K562 (cell line): ENCODE measurements at regions of chr2 and their contacts with region 1.

Region 1: DNA sequence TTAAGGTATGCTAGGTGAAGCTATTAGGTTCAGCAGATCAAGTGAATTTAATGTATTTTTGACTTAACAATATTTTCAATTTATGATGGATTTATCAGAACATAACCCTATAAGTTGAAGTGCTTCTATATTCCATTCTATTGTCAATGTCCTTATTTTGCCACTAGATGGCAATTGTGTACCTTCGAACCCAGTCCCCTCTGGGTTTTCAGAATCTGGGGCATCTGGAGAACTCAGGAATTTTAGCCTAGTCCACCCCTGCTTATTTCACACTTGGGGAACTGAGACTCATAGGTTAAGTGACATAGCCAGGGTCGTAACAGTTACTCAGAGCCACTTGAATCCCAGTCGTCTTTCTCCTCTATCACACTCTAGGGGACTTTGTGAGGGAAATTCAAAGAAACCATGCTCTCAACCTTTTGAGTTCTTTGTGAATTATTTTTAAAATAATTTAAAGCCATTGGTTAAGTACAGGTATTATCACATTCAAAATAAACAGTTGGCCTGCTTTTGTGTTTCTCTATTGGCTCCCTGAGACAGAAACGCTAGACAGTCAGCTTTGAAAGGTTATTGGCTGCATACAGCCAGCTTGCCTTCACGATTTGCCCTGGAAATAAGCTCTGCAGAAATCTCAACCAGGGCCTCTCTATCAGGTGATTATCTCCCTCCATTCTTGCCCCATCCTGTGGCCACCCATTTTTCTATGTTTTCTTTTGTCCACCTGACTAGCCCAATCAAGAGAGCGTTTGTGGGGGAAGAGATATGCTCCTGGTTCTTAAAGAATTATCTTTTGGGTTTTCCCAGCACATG is 145.0 kb downstream of the TTC27 start:
- DNase-seq: peak; percentile 60 to 61 (median 60)
- ATAC-seq: peak; percentile 78
- H3K4me3 ChIP-seq: no peak overlapping the region
- H3K27ac ChIP-seq: no peak overlapping the region
- H3K4me1 ChIP-seq: peaks cover 4 to 8% of the 10 kb centered on the region in 2 experiments; a peak in 2 of 5 replicates
- H3K27me3 ChIP-seq: no peaks in the 10 kb centered on the region
- CTCF ChIP-seq: peak; percentile 66 to 87 (median 75)
- EP300 ChIP-seq: no peak
- POLR2A ChIP-seq: no peak
- RAD21 ChIP-seq: peak; percentile 96 to 97

Region 2: GRCh38 chr2:32553829-32554432 is 218.9 kb before region 1 on chr2:
- CTCF ChIA-PET with region 1: interaction called, 4 read pairs
- POLR2A ChIA-PET with region 1: no interaction called
- in situ Hi-C with region 1: no loop called
- intact Hi-C with region 1: loop called (anchors 2 kb)
- DNase-seq: peak; percentile 35 to 61 (median 47)
- ATAC-seq: peak; percentile 93
- H3K4me3 ChIP-seq: no peak overlapping the region
- H3K27ac ChIP-seq: no peak overlapping the region
- H3K4me1 ChIP-seq: no peaks in the 10 kb centered on the region
- H3K27me3 ChIP-seq: no peaks in the 10 kb centered on the region
- CTCF ChIP-seq: peak; percentile 36 to 80 (median 44); a peak in 4 of 6 replicates
- EP300 ChIP-seq: no peak
- POLR2A ChIP-seq: no peak
- RAD21 ChIP-seq: peak; percentile 75 to 86

Region 3: GRCh38 chr2:32931945-32932709 is 159.3 kb after region 1 on chr2:
- CTCF ChIA-PET with region 1: no interaction called
- POLR2A ChIA-PET with region 1: no interaction called
- in situ Hi-C with region 1: no loop called
- intact Hi-C with region 1: no loop called
- DNase-seq: no peak
- ATAC-seq: no peak
- H3K4me3 ChIP-seq: no peak overlapping the region
- H3K27ac ChIP-seq: no peak overlapping the region
- H3K4me1 ChIP-seq: peaks cover 0 to 7% of the 10 kb centered on the region in 2 experiments; a peak in 3 of 5 replicates
- H3K27me3 ChIP-seq: 0 out of 5 replicates have a peak, but pooled peaks cover 0 to 2% of the 10 kb centered on the region in 2 experiments
- CTCF ChIP-seq: no peak
- EP300 ChIP-seq: no peak
- POLR2A ChIP-seq: no peak
- RAD21 ChIP-seq: no peak

Region 4: DNA sequence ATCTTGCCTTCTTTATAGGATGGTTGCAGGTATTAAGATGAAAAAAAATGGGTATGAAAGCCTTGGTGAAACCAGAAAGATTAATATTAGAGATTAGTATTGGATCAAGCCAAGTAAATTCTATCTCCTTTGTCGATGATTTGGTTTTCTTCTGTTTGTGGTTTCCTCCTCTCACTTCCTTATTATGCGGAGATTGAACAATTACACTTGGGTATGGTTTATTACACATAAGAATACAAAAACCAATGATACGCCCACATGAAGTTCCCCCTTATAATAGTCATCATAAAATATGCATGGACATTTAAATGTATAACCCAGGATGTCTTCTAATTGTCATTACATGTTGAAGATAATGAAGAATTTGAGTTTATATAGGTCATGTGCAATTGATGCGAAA is 178.8 kb after region 1 on chr2:
- CTCF ChIA-PET with region 1: no interaction called
- POLR2A ChIA-PET with region 1: no interaction called
- in situ Hi-C with region 1: loop called (anchors 5 kb)
- intact Hi-C with region 1: loop called (anchors 1 kb)
- DNase-seq: no peak
- ATAC-seq: no peak
- H3K4me3 ChIP-seq: no peak overlapping the region
- H3K27ac ChIP-seq: no peak overlapping the region
- H3K4me1 ChIP-seq: peaks cover 26 to 42% of the 10 kb centered on the region in 2 experiments; a peak in 4 of 5 replicates
- H3K27me3 ChIP-seq: no peaks in the 10 kb centered on the region
- CTCF ChIP-seq: no peak
- EP300 ChIP-seq: no peak
- POLR2A ChIP-seq: no peak
- RAD21 ChIP-seq: no peak

Region 5: GRCh38 chr2:33275689-33276444 is 503.0 kb after region 1 on chr2:
- CTCF ChIA-PET with region 1: no interaction called
- POLR2A ChIA-PET with region 1: no interaction called
- in situ Hi-C with region 1: no loop called
- intact Hi-C with region 1: loop called (anchors 2 kb)
- DNase-seq: peak; percentile 54 to 73 (median 63)
- ATAC-seq: peak; percentile 91
- H3K4me3 ChIP-seq: no peak overlapping the region
- H3K27ac ChIP-seq: no peak overlapping the region; the same call in 2 of the 3 replicates
- H3K4me1 ChIP-seq: peaks cover 0 to 6% of the 10 kb centered on the region in 2 experiments; a peak in 2 of 5 replicates
- H3K27me3 ChIP-seq: no peaks in the 10 kb centered on the region
- CTCF ChIP-seq: no peak
- EP300 ChIP-seq: peak; percentile 68
- POLR2A ChIP-seq: no peak
- RAD21 ChIP-seq: no peak

Region 6: DNA sequence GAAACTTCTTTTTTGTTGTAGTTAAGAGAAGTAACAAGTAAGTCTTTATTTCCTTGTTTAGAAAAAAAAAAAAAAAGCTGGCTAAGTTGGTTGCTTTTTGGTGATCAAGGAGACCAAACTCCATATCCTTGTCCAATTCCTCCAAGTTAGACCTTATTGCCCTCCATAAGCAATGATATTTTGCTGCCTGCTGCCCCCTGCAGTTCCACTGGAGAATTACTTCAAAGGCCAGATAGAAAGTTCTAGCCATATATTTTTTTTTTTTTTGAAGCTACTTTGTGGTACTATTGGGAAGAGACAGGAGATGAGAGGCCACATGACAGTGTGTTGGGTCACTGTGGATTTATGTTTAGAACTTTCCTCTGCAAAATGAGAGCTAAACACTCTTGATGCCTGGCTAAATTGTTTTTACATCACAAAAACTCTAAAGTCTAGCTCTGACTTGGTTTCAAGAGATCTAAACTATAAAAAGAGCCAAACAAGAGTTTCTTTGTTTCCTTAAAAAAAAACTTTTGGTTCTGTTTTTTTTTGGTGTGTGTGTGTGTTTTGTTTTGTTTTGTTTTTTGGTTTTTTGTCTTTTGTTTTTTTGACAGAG is 622.9 kb after region 1 on chr2:
- CTCF ChIA-PET with region 1: interaction called, 3 read pairs
- POLR2A ChIA-PET with region 1: no interaction called
- in situ Hi-C with region 1: no loop called
- intact Hi-C with region 1: loop called (anchors 5 kb)
- DNase-seq: peak; percentile 52 to 63 (median 55)
- ATAC-seq: peak; percentile 86
- H3K4me3 ChIP-seq: no peak overlapping the region
- H3K27ac ChIP-seq: no peak overlapping the region
- H3K4me1 ChIP-seq: peaks cover 0 to 2% of the 10 kb centered on the region in 2 experiments; a peak in 1 of 5 replicates
- H3K27me3 ChIP-seq: no peaks in the 10 kb centered on the region
- CTCF ChIP-seq: peak; percentile 67 to 79 (median 74); a peak in 5 of 6 replicates
- EP300 ChIP-seq: no peak
- POLR2A ChIP-seq: no peak
- RAD21 ChIP-seq: peak; percentile 48 to 73

Region 7: DNA sequence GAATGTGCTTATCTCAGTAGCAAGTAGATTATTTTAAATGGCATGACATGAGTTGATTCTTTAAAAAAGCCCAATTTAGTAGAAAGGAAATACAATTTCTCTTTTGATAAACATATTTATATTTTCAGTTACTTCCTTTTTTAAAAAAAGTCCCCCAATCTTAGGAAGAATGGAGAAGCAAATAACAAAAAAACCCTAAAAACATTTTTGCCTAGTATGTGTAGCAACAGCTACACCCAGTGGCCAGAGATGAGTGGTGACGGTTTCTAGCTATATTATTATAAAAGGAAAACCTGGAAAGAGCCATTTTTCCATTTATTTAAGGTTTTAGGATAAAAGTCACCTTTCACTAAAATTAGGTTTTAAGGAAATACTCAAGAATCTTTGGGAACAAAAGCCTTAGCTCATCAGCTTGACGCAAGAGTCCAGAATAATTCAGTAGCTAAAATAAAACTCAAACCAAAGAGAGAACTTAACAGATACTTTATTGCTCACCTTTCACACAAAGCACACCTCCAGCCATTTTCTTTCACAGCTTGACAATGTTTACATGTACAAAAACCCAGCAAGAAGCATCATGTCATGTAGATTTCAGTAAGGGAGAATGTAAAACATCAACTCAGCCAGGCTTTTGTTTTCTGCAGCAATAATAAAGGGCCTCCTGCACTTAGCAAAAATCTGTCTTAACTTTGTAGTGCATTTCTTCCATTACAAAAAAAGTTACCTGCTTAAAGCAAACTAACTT is 810.5 kb after region 1 on chr2:
- CTCF ChIA-PET with region 1: interaction called, 3 read pairs
- POLR2A ChIA-PET with region 1: no interaction called
- in situ Hi-C with region 1: loop called (anchors 25 kb)
- intact Hi-C with region 1: loop called (anchors 2 kb)
- DNase-seq: peak; percentile 23 to 50 (median 34)
- ATAC-seq: peak; percentile 75
- H3K4me3 ChIP-seq: no peak overlapping the region
- H3K27ac ChIP-seq: no peak overlapping the region
- H3K4me1 ChIP-seq: no peaks in the 10 kb centered on the region
- H3K27me3 ChIP-seq: no peaks in the 10 kb centered on the region
- CTCF ChIP-seq: peak; percentile 59 to 83 (median 64); a peak in 5 of 6 replicates
- EP300 ChIP-seq: no peak
- POLR2A ChIP-seq: no peak
- RAD21 ChIP-seq: peak; percentile 92 to 96